GM13977 (cell line): ENCODE measurements at regions of chr11 and their contacts with region 1.

Region 1: GRCh38 chr11:16945671-16946469 is 68.3 kb downstream of the PLEKHA7 start:
- DNase-seq: peak; percentile 67
- CTCF ChIP-seq: peak; percentile 84

Region 2: GRCh38 chr11:16511116-16512114 is 434.5 kb before region 1 on chr11:
- in situ Hi-C with region 1: no loop called
- DNase-seq: no peak
- CTCF ChIP-seq: no peak

Region 3: DNA sequence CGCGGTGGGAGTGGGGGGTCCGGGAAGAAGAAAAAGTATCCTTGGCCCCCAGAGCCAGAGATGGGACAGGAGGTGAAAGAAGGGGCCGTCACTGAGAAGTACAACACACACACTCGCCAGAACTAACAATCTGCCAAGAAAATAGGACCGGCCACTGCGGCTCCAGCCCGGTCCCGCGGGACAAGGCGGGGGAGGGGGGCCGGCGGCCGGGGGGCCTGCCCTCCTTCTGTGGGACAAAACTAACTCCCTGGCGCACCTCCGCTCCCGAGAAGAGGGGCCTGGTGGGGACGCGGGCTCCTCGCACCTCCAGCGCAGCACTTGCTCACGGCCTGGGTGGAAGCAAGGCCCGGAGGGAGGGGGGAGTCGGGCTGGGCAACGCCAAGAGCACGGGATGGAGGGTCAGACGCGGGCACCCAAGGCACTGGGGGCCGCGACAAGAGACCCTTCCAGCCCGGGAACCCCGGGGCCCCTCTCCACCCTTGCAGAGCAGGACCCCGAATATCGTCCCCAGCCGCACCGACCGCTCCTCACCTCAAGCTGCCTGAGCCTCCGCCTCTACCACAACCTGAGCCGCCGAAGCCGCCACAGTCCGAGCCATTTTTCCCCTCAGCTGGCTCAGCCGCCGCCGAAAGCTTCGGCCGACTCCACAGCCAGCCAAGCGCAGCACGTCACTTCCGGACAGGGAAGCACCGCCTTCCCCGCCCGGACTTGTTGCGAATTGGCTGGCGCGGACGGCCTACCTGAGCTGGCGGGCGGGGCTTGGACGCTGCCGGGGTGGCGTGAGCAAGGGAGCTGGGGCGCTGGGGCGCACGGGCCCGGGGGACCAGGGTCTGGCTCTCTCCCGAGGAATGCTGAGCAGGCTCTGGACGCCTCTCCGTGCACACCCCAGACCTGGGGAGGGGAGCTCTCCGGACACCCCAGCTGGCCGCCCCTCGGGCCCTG is 261.7 kb after region 1 on chr11 and contains the start of gene PIK3C2A:
- in situ Hi-C with region 1: loop called (anchors 25 kb)
- DNase-seq: peak; percentile 95
- CTCF ChIP-seq: no peak